ENCODE measurements at regions of chr2 and their contacts with region 1.

Region 1: GRCh38 chr2:98454500-98455235 is 10.0 kb downstream of the INPP4A start:
- DNase-seq: no peak
- H3K4me3 ChIP-seq: no peak overlapping the region
- H3K27ac ChIP-seq: no peak overlapping the region
- H3K4me1 ChIP-seq: peaks cover 33% of the 10 kb centered on the region
- H3K27me3 ChIP-seq: no peaks in the 10 kb centered on the region
- CTCF ChIP-seq: no peak

Region 2: GRCh38 chr2:98508709-98509066 is 54.0 kb after region 1 on chr2:
- CTCF ChIA-PET with region 1: no interaction called
- dilution Hi-C with region 1: loop called (anchors 5 kb)
- in situ Hi-C with region 1: no loop called
- intact Hi-C with region 1: no loop called
- DNase-seq: peak; percentile 85
- H3K4me3 ChIP-seq: no peak overlapping the region
- H3K27ac ChIP-seq: no peak overlapping the region
- H3K4me1 ChIP-seq: peaks cover 7% of the 10 kb centered on the region
- H3K27me3 ChIP-seq: no peaks in the 10 kb centered on the region
- CTCF ChIP-seq: no peak

Region 3: GRCh38 chr2:98541906-98542305 is 87.2 kb after region 1 on chr2:
- CTCF ChIA-PET with region 1: no interaction called
- dilution Hi-C with region 1: loop called (anchors 5 kb)
- in situ Hi-C with region 1: no loop called
- intact Hi-C with region 1: no loop called
- DNase-seq: peak; percentile 27
- H3K4me3 ChIP-seq: no peak overlapping the region
- H3K27ac ChIP-seq: no peak overlapping the region
- H3K4me1 ChIP-seq: no peaks in the 10 kb centered on the region
- H3K27me3 ChIP-seq: no peaks in the 10 kb centered on the region
- CTCF ChIP-seq: no peak

Region 4: DNA sequence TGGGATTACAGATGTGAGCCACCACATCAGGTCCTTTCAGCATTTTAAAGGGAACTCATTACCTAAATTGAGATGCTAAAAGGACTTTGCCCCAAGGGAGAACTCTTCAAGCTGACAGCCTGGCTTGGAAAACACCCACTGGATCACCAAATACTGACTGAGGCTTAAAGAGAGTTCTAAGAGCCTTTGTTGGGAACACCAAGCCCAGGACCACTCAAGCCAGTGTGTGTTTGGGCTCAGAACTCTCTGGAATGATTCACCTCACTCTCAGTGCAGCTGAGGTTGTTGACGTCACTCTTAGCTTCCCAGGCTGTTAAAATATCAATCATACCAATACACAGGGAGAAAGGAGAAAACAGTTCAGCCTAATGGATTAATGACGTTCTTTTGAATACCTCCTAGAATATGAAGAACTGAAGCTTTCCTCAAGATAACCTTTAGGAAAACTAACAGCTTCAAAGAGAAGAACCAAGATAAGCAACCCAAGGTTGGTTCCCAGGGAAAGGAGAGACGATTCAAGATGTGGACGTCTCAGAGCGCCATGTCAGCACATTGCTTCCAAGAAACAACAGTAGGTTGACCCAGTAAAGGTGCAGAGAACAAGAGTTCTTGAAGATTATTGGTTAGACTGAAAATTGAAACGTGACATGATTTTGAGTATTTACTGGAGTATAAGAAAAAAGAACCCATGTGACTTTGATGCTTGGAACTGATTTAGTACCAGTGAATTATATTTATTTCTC is 324.2 kb after region 1 on chr2:
- CTCF ChIA-PET with region 1: no interaction called
- dilution Hi-C with region 1: no loop called
- in situ Hi-C with region 1: no loop called
- intact Hi-C with region 1: no loop called
- DNase-seq: no peak
- H3K4me3 ChIP-seq: no peak overlapping the region
- H3K27ac ChIP-seq: no peak overlapping the region
- H3K4me1 ChIP-seq: no peaks in the 10 kb centered on the region
- H3K27me3 ChIP-seq: no peaks in the 10 kb centered on the region
- CTCF ChIP-seq: no peak